ENCODE measurements at regions of chr5 and their contacts with region 1.

Region 1: DNA sequence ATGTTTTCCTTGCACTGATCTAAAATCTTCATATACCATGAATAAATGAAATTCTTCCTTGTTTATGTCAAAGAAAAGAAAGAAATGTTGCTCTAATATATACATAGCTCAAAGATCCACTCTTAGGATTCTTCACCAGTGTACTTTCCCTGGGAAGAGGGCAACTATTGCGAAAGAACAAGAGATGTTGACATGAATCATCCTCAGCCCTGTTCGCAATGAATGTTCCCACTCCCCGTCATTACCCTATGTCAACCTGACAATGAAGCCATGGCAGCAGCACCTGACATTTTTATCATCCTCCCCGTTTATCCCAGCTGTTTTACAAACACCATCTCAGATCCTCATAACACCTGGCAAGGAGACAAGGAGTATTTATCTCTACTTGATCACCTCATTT is 409.1 kb upstream of the GRIA1 start:
- DNase-seq: no peak
- ATAC-seq: no peak
- H3K4me3 Mint-ChIP-seq: no peak overlapping the region
- H3K27ac Mint-ChIP-seq: no peak overlapping the region
- H3K4me1 Mint-ChIP-seq: peaks cover 19% of the 10 kb centered on the region
- H3K27me3 Mint-ChIP-seq: peaks cover 4% of the 10 kb centered on the region; the same call in 1 of the 2 replicates
- CTCF ChIP-seq: no peak

Region 2: DNA sequence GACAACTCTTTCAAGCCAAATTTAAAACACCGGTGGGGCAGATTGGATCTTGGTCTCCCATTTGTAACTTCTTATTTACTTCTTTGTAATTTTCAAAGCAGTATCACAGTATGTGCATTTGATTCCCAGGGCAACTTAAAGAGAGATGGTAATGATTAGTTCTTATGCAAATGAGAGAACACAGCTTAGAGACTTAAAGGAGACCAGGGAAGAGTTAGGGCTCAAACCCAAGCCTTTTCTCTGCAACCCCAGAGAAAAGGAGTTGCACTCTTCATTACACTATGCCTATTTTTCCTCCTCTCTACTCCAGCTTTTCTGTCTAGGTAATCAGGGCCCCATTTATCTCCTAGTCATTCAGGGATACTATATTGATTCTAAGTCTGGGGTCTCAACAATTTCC is 438.5 kb before region 1 on chr5:
- CTCF ChIA-PET with region 1: no interaction called
- POLR2A ChIA-PET with region 1: interaction called, 10 read pairs
- DNase-seq: no peak
- ATAC-seq: peak; percentile 86
- H3K4me3 Mint-ChIP-seq: no peak overlapping the region
- H3K27ac Mint-ChIP-seq: no peak overlapping the region
- H3K4me1 Mint-ChIP-seq: peaks cover 31% of the 10 kb centered on the region
- H3K27me3 Mint-ChIP-seq: peaks cover 85% of the 10 kb centered on the region
- CTCF ChIP-seq: no peak

Region 3: GRCh38 chr5:153067869-153068268 is 13.5 kb before region 1 on chr5:
- CTCF ChIA-PET with region 1: no interaction called
- POLR2A ChIA-PET with region 1: no interaction called
- DNase-seq: no peak
- ATAC-seq: 0 out of 2 replicates have a peak, but pooled peaks have one; percentile 26
- H3K4me3 Mint-ChIP-seq: no peak overlapping the region
- H3K27ac Mint-ChIP-seq: no peak overlapping the region
- H3K4me1 Mint-ChIP-seq: peaks cover 9% of the 10 kb centered on the region
- H3K27me3 Mint-ChIP-seq: no peaks in the 10 kb centered on the region
- CTCF ChIP-seq: no peak

Region 4: DNA sequence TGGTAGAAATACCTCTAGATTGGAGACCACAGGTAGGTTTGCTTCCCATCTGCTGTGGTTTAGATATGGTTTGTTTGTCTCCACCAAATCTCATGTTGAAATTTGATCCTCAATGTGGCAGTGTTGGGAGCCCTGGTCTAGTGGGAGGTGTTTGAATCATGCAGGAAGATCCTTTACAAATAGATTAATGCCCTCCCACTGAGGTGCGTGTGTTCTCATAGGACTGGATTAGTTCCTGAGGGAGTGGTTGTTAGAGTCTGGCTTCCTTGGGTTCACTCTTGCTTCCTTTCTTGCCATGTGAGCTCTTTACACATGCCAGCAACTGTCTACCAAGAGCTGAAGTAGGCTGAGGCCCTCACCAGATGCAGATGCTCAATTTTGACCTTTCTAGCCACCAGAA is 17.9 kb after region 1 on chr5:
- CTCF ChIA-PET with region 1: no interaction called
- POLR2A ChIA-PET with region 1: no interaction called
- DNase-seq: no peak
- ATAC-seq: peak; percentile 69
- H3K4me3 Mint-ChIP-seq: no peak overlapping the region
- H3K27ac Mint-ChIP-seq: no peak overlapping the region
- H3K4me1 Mint-ChIP-seq: peaks cover 5% of the 10 kb centered on the region
- H3K27me3 Mint-ChIP-seq: no peaks in the 10 kb centered on the region
- CTCF ChIP-seq: no peak